Sigmoid colon (tissue), 7 donors: ENCODE measurements at regions of chr4 and their contacts with region 1.

Region 1: GRCh38 chr4:17324386-17324830 is 187.5 kb downstream of the QDPR start:
- DNase-seq: no peak
- H3K4me3 ChIP-seq: no peak overlapping the region
- H3K27ac ChIP-seq: no peak overlapping the region
- H3K4me1 ChIP-seq: peaks cover 0 to 10% (median 4%) of the 10 kb centered on the region in 4 donors
- H3K27me3 ChIP-seq: no peaks in the 10 kb centered on the region
- CTCF ChIP-seq: peak; percentile 32 to 54 (median 44)
- EP300 ChIP-seq: no peak
- POLR2A ChIP-seq: no peak

Region 2: DNA sequence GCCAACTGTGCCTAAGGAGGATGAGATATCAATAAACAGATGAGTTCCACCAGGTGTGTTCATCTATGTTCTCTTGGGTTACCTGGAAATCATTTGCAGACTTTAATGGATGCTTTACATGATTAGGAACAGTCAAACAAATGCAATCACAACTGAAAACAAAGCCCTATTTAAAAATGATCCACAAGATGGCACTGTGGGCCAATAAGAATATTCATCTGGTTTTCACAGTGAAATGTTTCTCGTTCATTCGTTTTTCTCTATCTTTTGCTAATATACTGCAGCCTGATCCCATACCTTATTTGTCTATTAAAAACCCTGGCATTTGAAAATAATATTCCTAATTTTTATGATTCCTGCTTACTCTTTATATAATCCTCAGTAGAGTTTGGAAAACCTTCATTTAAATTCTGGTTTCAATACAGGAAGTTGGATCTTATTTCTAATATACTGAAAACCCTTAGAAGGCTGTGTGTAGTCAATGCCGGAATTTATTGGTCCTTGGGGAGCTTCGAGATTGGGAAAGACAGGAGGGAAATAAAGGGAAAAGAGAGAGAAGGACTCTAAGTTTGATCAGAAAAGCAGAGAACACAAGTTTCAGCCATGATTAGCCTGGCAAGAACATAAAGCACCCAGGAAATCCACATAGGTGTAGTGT is 1034.4 kb before region 1 on chr4:
- intact Hi-C with region 1: loop called (anchors 5 kb)
- DNase-seq: no peak
- H3K4me3 ChIP-seq: no peak overlapping the region
- H3K27ac ChIP-seq: no peak overlapping the region
- H3K4me1 ChIP-seq: peaks cover 0 to 8% (median 3%) of the 10 kb centered on the region in 4 donors
- H3K27me3 ChIP-seq: peaks cover 0 to 21% (median 4%) of the 10 kb centered on the region in 3 donors
- CTCF ChIP-seq: peak in 3 of 4 experiments; percentile 29 to 56 (median 41)
- EP300 ChIP-seq: no peak
- POLR2A ChIP-seq: no peak

Region 3: DNA sequence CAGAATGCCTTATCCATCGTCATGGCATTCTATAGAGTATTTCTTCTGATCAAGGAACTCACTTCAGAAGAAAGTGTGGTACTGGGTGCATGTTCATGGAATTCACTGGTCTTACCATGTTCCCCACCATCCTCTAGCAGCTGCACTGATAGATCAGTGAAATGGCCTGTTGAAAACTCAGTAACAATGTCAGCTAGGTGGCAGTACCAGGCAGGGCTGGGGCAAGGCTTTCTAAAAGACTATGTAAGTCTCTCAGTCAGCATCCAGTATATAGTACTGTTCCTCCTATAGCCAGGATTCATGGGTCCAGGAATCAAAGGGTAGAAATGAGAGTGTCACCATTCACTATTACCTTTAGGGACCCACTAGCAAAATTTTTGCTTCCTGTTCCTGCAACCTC is 410.2 kb before region 1 on chr4:
- intact Hi-C with region 1: loop called (anchors 5 kb)
- DNase-seq: no peak
- H3K4me3 ChIP-seq: no peak overlapping the region
- H3K27ac ChIP-seq: no peak overlapping the region
- H3K4me1 ChIP-seq: peaks cover 0 to 3% (median under 1%) of the 10 kb centered on the region in 4 donors
- H3K27me3 ChIP-seq: no peaks in the 10 kb centered on the region
- CTCF ChIP-seq: peak in 2 of 4 experiments; percentile 23 to 30
- EP300 ChIP-seq: no peak
- POLR2A ChIP-seq: no peak